ENCODE measurements at regions of chr17 and their contacts with region 1.

Region 1: DNA sequence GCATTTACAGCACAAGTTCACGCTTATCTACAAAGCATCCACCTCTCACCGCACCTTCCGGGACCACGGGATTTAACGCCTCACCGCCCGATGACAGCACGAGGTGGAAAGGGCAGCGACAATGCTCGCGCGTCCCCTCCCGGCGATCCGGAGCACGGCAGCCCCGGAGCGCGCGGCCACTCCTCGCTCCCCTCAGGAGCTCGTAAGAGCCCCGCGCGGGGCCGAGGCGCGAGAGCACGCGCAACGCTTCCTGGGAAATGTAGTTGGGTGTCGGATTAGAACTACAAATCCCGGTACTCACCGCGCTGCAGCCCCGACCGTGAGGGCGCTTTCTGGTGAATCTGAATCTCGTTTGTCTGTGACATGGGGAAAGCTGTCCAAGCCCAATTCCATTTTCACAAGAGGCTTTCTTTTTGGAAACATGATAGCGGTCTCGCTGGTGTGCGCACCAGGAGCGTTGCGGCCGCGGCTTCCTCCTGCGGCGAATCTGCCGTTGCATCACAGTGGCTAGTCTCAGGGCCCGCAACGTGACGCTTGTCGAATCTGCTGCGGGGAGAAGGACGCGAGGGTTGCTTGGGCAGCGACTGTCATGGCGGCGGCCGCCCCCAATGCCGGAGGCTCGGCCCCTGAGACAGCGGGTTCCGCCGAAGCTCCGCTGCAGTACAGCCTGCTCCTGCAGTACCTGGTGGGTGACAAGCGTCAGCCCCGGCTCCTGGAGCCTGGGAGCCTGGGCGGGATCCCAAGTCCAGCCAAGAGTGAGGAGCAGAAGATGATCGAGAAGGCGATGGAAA is at the start of gene TIMM22:
- DNase-seq: peak; percentile 85
- ATAC-seq: peak; percentile 98
- H3K4me3 ChIP-seq: peak within 1 kb of the TSS; percentile 79
- H3K27ac ChIP-seq: peak within 1 kb of the TSS; percentile 81
- H3K4me1 ChIP-seq: peaks cover 6% of the 10 kb centered on the region; the same call in 1 of the 2 replicates
- H3K27me3 ChIP-seq: no peaks in the 10 kb centered on the region
- CTCF ChIP-seq: peak; percentile 89 to 91 (median 91)
- EP300 ChIP-seq: peak; percentile 13 to 100; a peak in 2 of 4 replicates
- POLR2A ChIP-seq: peak; percentile 94
- RAD21 ChIP-seq: peak; percentile 68
- polyA plus RNA-seq, gene TIMM22: 4.4 to 5.7 TPM

Region 2: GRCh38 chr17:781805-782731 is 214.7 kb before region 1 on chr17 and contains the starts of genes GLOD4 and MRM3:
- CTCF ChIA-PET with region 1: interaction called, 9 read pairs
- POLR2A ChIA-PET with region 1: interaction called, 4 read pairs
- RAD21 ChIA-PET with region 1: interaction called, 5 read pairs
- SMC1A ChIA-PET with region 1: interaction called, 4 read pairs
- in situ Hi-C with region 1: no loop called
- intact Hi-C with region 1: loop called (anchors 5 kb)
- DNase-seq: peak; percentile 72
- ATAC-seq: peak; percentile 96
- H3K4me3 ChIP-seq: peak within 1 kb of the TSS; percentile 89
- H3K27ac ChIP-seq: peak within 1 kb of the TSS; percentile 72
- H3K4me1 ChIP-seq: peaks cover 10% of the 10 kb centered on the region
- H3K27me3 ChIP-seq: no peaks in the 10 kb centered on the region
- CTCF ChIP-seq: peak in 2 of 3 experiments; percentile 11 to 16; a peak in 1 of 6 replicates
- EP300 ChIP-seq: peak in 1 of 2 experiments; percentile 38; a peak in 1 of 4 replicates
- POLR2A ChIP-seq: peak; percentile 98
- RAD21 ChIP-seq: no peak
- polyA plus RNA-seq, gene GLOD4: 83.4 to 107 TPM
- polyA plus RNA-seq, gene MRM3: 2.3 to 6.0 TPM

Region 3: GRCh38 chr17:879549-880442 is 117.0 kb before region 1 on chr17:
- CTCF ChIA-PET with region 1: interaction called, 14 read pairs
- POLR2A ChIA-PET with region 1: no interaction called
- RAD21 ChIA-PET with region 1: interaction called, 7 read pairs
- SMC1A ChIA-PET with region 1: interaction called, 5 read pairs
- in situ Hi-C with region 1: no loop called
- intact Hi-C with region 1: no loop called
- DNase-seq: peak; percentile 5
- ATAC-seq: peak; percentile 80
- H3K4me3 ChIP-seq: no peak overlapping the region
- H3K27ac ChIP-seq: no peak overlapping the region
- H3K4me1 ChIP-seq: no peaks in the 10 kb centered on the region
- H3K27me3 ChIP-seq: no peaks in the 10 kb centered on the region
- CTCF ChIP-seq: peak; percentile 43 to 59 (median 45); a peak in 5 of 6 replicates
- EP300 ChIP-seq: no peak
- POLR2A ChIP-seq: no peak
- RAD21 ChIP-seq: peak; percentile 36; the same call in 1 of the 2 replicates

Region 4: DNA sequence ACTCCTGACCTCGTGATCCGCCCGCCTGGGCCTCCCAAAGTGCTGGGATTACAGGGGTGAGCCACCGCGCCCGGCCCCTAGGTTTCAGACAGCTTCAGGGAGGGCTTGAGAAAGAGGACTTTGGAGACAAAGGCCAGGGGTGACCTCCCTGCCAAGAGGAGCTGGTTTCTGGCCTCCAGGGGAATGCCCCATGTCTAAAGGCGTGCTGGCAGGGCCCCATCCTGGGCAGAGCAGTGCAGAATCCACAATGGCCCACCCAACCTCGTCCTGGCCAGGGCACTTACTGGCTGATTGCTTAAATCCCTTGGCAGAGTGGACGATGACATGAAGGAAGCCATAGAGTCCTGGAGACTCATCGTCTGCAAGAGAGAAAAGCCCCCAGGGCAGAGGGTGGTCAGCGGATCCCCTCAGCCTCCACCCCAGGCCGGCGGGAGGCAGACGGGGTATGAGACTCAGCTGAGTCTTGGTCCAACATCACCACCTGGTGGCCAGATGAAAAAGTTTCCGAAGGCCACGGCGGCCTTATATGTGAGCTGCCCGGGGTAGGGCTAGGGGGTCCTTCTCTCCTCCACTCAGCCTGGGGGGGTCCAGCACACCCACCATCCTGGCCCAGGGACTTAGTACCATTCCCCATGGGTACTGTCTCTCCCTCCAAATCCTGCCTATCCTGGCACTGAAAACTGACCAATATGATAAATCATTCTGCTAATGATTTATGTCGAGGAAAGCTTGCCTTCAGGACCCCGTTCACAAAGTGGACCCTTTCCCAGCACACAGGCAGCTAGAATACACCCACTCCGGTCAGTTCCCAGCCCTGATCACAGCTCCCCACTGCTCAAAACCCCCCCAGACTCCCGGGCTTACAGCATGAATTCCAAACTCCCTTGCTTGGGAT is 59.2 kb after region 1 on chr17:
- CTCF ChIA-PET with region 1: interaction called, 15 read pairs
- POLR2A ChIA-PET with region 1: no interaction called
- RAD21 ChIA-PET with region 1: no interaction called
- SMC1A ChIA-PET with region 1: no interaction called
- in situ Hi-C with region 1: no loop called
- intact Hi-C with region 1: no loop called
- DNase-seq: no peak
- ATAC-seq: peak; percentile 83
- H3K4me3 ChIP-seq: no peak overlapping the region
- H3K27ac ChIP-seq: no peak overlapping the region
- H3K4me1 ChIP-seq: no peaks in the 10 kb centered on the region
- H3K27me3 ChIP-seq: no peaks in the 10 kb centered on the region
- CTCF ChIP-seq: peak; percentile 38 to 44 (median 40); a peak in 5 of 6 replicates
- EP300 ChIP-seq: no peak
- POLR2A ChIP-seq: no peak
- RAD21 ChIP-seq: no peak; the same call in 1 of the 2 replicates

Measured in GM12878 (cell line).